Left cardiac atrium (tissue), 4 donors: ENCODE measurements at regions of chr3 and their contacts with region 1.

Region 1: GRCh38 chr3:147462856-147463255 is 53.7 kb downstream of the ZIC1 start:
- DNase-seq: no peak
- ATAC-seq: no peak

Region 2: GRCh38 chr3:147267434-147267833 is 195.4 kb before region 1 on chr3:
- intact Hi-C with region 1: no loop called
- DNase-seq: no peak
- ATAC-seq: no peak

Region 3: GRCh38 chr3:147521646-147522045 is 58.8 kb after region 1 on chr3:
- intact Hi-C with region 1: loop called in 1 of 2 experiments (anchors 10 kb)
- DNase-seq: no peak
- ATAC-seq: no peak